ENCODE measurements at regions of chr3 and their contacts with region 1.

Region 1: GRCh38 chr3:141105828-141106628 is 54.9 kb downstream of the SPSB4 start:
- DNase-seq: peak; percentile 59 to 61
- ATAC-seq: peak; percentile 33 to 40
- H3K4me3 ChIP-seq: no peak overlapping the region
- H3K27ac ChIP-seq: no peak overlapping the region
- H3K4me1 ChIP-seq: peaks cover 19 to 23% of the 10 kb centered on the region in 2 donors
- H3K27me3 ChIP-seq: no peaks in the 10 kb centered on the region
- CTCF ChIP-seq: peak; percentile 65 to 84 (median 72)
- POLR2A ChIP-seq: no peak

Region 2: GRCh38 chr3:140370686-140371085 is 735.3 kb before region 1 on chr3:
- in situ Hi-C with region 1: no loop called
- intact Hi-C with region 1: no loop called
- DNase-seq: no peak
- ATAC-seq: no peak
- H3K4me3 ChIP-seq: no peak overlapping the region
- H3K27ac ChIP-seq: no peak overlapping the region
- H3K4me1 ChIP-seq: no peaks in the 10 kb centered on the region
- H3K27me3 ChIP-seq: no peaks in the 10 kb centered on the region
- CTCF ChIP-seq: no peak
- POLR2A ChIP-seq: no peak

Region 3: DNA sequence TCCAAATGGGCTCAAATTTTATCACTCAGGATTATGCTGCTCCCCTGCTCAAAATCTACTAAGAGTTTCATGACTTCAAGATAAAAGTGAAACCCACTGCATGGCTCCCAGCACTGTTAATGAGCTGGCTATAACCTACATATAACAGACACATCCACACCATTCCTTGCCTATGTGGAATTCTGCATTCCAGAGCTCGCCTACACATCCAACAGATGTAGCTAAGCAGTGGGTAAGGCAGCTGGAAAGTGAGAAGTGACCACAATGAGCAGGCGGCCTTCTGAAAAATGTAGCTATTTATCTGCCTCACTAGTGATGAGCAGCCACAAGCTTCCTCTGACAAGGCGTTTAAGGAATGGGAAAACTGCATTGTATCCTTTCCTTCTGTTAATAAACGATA is 520.2 kb before region 1 on chr3:
- in situ Hi-C with region 1: no loop called
- intact Hi-C with region 1: no loop called
- DNase-seq: no peak
- ATAC-seq: no peak
- H3K4me3 ChIP-seq: no peak overlapping the region
- H3K27ac ChIP-seq: no peak overlapping the region
- H3K4me1 ChIP-seq: no peaks in the 10 kb centered on the region
- H3K27me3 ChIP-seq: no peaks in the 10 kb centered on the region
- CTCF ChIP-seq: no peak
- POLR2A ChIP-seq: no peak

Region 4: GRCh38 chr3:140898340-140899180 is 207.5 kb before region 1 on chr3:
- in situ Hi-C with region 1: loop called in 2 of 4 experiments (anchors 5 to 25 kb)
- intact Hi-C with region 1: loop called (anchors 5 kb)
- DNase-seq: no peak
- ATAC-seq: peak; percentile 68 to 72
- H3K4me3 ChIP-seq: no peak overlapping the region
- H3K27ac ChIP-seq: no peak overlapping the region
- H3K4me1 ChIP-seq: peaks cover 7 to 11% of the 10 kb centered on the region in 2 donors
- H3K27me3 ChIP-seq: no peaks in the 10 kb centered on the region
- CTCF ChIP-seq: peak; percentile 24 to 53 (median 48)
- POLR2A ChIP-seq: no peak

Region 5: DNA sequence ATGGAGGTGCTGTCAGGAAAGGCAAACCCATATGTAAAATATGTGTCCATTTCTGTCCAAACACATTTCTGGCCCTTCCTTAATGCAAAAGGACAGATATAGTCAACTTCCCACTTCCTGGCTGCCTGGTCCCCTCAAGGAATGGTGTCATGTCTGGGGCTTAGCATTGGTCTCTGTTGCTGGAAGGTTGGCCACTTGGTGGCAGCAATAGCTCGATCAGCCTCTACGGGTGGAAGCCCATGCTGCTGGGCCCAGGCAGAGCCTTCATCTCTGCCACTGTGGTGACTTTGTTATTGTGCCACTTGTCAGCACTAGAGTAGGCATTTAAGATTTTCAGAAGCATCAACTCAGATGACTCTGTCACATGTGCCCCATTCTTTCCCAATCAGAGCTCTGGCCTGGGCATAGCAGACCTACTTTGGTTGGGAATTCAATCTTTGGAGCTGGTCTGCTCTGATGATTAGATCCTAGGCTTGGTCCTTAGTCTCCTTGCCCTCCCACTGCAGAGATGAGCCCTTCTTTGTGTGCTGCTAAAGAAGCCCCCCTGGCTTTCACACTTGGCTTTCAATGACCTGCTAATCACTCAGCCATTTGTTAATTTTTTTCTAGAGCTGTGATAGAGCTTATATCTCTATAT is 105.9 kb before region 1 on chr3:
- in situ Hi-C with region 1: loop called in 1 of 4 experiments (anchors 10 kb)
- intact Hi-C with region 1: no loop called
- DNase-seq: peak; percentile 20 to 38
- ATAC-seq: peak; percentile 62 to 78
- H3K4me3 ChIP-seq: no peak overlapping the region
- H3K27ac ChIP-seq: no peak overlapping the region
- H3K4me1 ChIP-seq: no peaks in the 10 kb centered on the region
- H3K27me3 ChIP-seq: no peaks in the 10 kb centered on the region
- CTCF ChIP-seq: peak; percentile 44 to 75 (median 63)
- POLR2A ChIP-seq: no peak

Region 6: DNA sequence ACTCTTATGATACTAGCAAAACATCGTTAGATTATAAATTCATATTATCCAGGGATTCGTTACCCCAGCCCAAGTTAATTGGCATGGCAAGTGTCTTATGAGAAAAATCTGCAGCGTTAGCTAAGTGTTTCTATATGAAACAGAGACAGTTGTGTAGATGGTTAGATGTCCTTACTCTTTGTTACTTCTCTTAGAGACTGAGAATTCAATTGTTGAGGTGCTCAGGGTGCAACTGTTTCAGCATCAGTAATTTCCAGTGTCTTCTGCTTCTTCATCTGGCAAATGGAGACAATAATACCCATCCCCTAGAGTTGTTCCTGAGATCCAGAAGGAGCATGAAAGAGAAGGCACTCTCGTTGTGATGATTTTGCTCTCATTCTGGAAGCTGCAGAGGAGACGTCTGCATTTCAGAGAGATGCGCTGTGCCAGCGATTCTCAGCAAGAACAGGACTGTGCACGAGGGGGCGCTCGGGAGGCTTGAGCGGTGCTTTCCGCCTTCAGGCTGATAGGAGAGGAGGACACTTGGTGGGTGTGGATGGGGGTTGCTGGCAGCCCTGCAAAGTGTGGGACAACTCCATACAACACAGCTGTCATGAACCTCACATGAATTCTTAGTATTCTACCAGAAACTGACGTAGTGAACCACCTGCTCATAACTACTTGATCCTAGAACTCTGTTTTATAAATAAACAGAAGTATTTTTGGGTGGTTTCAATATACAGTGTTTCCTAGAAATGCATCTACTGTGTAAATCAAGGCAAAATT is 94.6 kb before region 1 on chr3:
- in situ Hi-C with region 1: loop called (anchors 5 to 10 kb)
- intact Hi-C with region 1: loop called (anchors 2 kb)
- DNase-seq: peak; percentile 31 to 63
- ATAC-seq: peak; percentile 58 to 75
- H3K4me3 ChIP-seq: no peak overlapping the region
- H3K27ac ChIP-seq: no peak overlapping the region
- H3K4me1 ChIP-seq: peaks cover 0 to 2% of the 10 kb centered on the region in 2 donors
- H3K27me3 ChIP-seq: no peaks in the 10 kb centered on the region
- CTCF ChIP-seq: peak; percentile 55 to 84 (median 69)
- POLR2A ChIP-seq: no peak

Region 7: DNA sequence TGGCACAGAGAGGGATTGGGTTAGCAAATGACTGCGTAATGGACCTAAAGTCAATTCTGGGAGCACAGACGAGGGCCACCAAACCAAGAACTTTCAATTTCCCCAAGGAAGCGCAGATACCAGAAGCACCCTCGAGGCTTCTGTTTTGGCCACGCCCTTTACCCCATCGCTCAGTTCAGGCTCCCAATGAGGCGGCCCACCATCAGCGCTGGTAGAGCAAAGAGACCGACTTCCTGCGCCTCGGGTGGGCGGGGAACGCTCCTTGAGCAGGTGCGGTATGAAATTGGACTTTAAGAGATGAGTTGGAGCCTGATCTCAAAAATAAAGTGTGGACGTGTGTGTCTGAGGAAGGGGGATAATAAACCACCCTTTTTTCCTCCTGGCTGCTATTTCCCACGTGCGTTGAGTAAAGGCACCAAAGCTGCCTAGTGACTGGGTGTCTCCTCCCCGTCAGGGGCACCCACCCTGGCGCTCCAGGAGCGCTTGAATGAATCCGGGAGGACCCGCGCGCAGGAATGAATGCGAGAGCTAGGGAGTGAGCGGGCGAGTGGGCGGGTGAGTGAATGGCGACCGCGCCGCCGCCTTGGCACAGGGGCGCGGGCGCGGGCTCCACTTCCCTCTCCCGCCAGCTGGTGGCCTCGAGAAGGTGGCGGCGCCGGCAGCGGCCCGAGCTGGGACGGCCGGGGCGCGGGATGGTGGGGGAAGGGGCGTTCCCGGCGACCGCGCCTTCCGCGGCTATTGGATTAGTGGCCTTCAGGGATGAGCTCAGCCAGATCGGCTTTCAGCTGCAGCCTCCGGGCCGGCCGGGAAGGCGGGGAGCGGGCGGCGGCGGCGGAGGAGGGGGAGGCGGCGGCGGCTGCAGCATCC is 55.2 kb before region 1 on chr3 and contains the start of gene SPSB4:
- in situ Hi-C with region 1: no loop called
- intact Hi-C with region 1: loop called (anchors 1 kb)
- DNase-seq: peak; percentile 61 to 72
- ATAC-seq: peak; percentile 82 to 89
- H3K4me3 ChIP-seq: peak within 1 kb of the TSS; percentile 57 to 68 (median 64)
- H3K27ac ChIP-seq: peak within 1 kb of the TSS in 2 of 4 donors; percentile 65 to 74
- H3K4me1 ChIP-seq: peaks cover 7 to 15% of the 10 kb centered on the region in 2 donors
- H3K27me3 ChIP-seq: peaks cover 0 to 13% (median 0%) of the 10 kb centered on the region in 3 donors
- CTCF ChIP-seq: peak; percentile 32 to 67 (median 59)
- POLR2A ChIP-seq: peak in 1 of 2 donors; percentile 55
- total RNA-seq, gene SPSB4: 0.35 to 0.81 TPM in 2 of 4 donors, not detected in the others

Region 8: GRCh38 chr3:141192345-141192744 is 86.3 kb after region 1 on chr3:
- in situ Hi-C with region 1: loop called in 1 of 4 experiments (anchors 5 kb)
- intact Hi-C with region 1: loop called (anchors 5 kb)
- DNase-seq: peak; percentile 84 to 95
- ATAC-seq: peak; percentile 98 to 99
- H3K4me3 ChIP-seq: no peak overlapping the region
- H3K27ac ChIP-seq: no peak overlapping the region
- H3K4me1 ChIP-seq: no peaks in the 10 kb centered on the region
- H3K27me3 ChIP-seq: no peaks in the 10 kb centered on the region
- CTCF ChIP-seq: peak; percentile 96 to 97 (median 96)
- POLR2A ChIP-seq: no peak

Measured in gastrocnemius medialis (tissue), 4 donors.